ENCODE measurements at regions of chr3 and their contacts with region 1.

Region 1: DNA sequence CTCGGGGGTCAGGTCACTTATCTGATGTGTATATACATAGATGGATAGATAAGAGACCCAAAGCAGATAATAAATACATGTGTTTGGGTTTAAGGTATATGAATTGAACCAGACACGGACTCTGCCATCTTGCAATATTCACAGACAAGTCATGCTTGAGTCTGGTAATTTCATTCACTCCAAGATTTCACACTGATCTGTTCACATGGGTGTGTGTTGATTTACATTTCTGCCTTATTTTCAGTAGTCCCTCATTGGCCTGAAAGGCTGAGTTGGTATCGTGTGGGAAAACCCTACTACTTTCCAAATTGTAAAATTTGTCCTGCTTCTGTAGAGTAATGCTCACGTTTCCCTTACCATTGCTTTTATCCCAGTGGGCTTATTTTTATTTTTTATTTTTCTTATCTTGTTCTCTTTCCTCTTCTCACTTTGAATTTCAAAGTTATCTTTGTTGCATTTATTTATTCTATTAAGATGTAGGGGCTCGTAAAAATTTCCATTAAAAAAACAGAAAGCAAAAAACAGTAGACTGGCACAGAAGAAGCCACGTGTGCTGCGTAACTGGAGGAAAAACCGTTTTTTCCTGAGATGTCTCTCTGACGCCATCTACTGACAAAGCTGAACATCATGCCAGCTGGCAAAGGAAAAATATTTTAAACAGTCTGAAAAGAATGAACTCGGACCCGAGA is 10.8 kb upstream of the MFSD1 start:
- DNase-seq: peak; percentile 53
- CTCF ChIP-seq: peak; percentile 85

Region 2: DNA sequence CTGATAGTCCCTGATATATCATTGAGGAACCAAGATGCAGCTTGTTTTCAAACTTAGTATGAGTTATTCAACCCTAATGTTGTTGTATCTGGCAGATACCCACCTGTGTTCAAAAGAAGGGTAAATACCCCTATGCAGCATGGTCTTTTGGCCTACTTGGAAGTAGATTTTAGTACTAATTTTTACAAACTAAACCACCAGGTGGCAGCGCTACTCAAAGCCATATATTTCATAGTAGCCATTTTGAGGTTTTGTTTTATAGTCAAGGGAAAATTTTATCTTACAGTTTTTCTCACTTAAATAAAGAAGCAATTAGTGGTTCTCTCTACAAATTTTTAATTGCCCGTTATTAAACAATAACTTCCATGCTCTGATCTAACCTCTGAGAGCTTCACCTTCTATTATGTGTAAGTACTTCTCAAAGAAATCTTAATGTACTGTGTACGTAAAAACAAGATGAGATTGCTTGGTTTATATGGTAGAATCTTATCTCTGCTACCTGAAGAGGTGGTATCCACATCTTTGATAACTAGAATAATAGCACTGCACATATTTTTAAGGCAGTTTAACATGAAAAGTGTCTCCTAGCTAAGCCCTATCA is 251.5 kb before region 1 on chr3:
- CTCF ChIA-PET with region 1: interaction called, 11 read pairs
- POLR2A ChIA-PET with region 1: no interaction called
- DNase-seq: no peak
- CTCF ChIP-seq: peak; percentile 30

Region 3: DNA sequence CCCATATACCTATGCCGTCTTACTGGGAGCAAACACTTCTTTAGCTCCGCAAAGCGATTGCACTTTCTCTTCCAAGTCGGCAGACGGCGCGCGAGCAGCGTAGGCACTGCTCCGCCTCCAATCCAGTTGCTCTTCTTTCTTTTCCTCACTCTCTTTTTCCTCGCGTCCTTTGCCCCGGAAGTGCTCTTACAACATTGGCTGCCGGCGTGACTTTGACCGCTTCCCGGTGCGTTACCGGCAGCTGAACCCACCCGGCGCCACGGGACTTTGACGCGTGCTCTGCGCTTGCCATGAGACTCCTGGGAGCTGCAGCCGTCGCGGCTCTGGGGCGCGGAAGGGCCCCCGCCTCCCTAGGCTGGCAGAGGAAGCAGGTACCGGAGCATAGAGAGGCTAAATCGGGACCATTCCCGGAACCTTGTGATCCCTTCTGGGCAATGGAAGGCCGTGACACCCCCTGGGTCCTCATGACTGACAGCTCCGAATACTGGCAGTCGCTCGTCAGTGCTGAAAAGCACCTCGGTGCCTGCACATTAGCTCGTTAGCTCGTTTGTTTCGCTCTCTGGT is 146.6 kb before region 1 on chr3 and contains the start of gene GFM1:
- CTCF ChIA-PET with region 1: interaction called, 15 read pairs
- POLR2A ChIA-PET with region 1: no interaction called
- DNase-seq: peak; percentile 91
- CTCF ChIP-seq: peak; percentile 98

Region 4: GRCh38 chr3:158777161-158777873 is 13.7 kb before region 1 on chr3:
- CTCF ChIA-PET with region 1: interaction called, 33 read pairs
- POLR2A ChIA-PET with region 1: no interaction called
- DNase-seq: no peak
- CTCF ChIP-seq: no peak

Region 5: DNA sequence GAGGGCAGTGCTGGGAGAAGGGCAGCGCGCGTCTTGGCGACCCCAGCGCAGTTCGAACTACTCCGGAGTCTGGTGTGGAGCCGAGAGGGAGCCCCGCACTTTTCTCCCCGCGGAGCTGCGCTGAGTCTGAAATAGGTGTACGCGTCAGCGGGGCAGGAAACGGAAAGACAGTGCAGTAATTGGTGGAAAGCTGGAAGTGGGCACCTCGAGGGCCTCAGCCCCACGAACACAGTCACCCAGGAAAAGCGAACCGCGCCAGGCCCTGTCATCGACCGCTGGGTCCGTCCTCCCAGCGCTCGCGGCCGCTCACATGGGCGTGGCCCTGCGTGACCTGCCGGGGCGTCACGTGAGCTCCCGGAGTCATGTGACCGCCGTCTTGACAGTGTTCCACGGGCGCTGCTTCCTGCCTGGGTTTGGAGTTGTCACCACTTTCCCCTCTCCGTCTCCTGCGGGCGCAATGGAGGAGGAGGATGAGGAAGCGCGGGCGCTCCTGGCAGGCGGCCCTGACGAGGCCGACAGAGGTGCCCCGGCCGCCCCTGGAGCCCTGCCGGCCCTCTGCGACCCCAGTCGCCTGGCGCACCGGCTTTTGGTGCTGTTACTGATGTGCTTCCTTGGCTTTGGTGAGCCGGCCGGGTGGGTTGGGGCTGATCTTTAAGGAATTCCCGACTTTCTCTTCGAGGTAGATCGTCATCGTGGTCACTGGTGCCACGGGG is 10.8 kb after region 1 on chr3 and contains the start of gene MFSD1:
- CTCF ChIA-PET with region 1: interaction called, 11 read pairs
- POLR2A ChIA-PET with region 1: no interaction called
- DNase-seq: peak; percentile 93
- CTCF ChIP-seq: no peak

Region 6: GRCh38 chr3:159114582-159114981 is 323.5 kb after region 1 on chr3:
- CTCF ChIA-PET with region 1: no interaction called
- POLR2A ChIA-PET with region 1: no interaction called
- DNase-seq: no peak
- CTCF ChIP-seq: no peak

Measured in GM10248 (cell line).